PC-9 (cell line): ENCODE measurements at regions of chr17 and their contacts with region 1.

Region 1: DNA sequence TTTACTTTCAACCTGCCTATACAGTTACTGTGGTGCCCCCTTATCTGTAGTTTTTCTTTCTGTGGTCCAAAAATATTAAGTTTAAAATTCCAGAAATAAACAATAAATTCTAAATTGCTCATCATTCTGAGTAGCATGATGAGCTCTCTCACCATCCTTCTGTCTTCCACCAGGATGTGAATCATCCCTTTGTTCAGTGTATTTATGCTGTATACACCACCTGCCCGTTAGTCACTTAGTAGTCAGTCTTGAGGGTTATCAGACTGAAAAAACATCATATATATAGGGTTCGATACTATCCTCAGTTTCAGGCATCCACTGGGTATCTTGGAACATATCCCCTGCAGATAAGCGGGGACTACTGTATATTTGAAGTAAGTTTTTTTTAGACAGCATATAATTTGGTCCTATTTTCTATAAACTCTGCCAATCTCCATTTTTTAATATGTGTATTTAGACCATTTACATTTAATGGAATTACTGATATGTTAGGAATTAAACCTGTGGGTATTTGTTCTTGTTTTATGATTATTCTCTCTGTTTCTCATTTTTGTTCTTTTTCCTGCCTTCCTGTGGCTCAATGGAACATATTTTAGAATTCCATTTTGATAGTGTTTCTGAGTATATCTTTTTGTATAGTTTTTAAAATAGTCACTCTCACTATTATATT is 31.0 kb downstream of the TBX21 start:
- DNase-seq: no peak
- H3K4me3 ChIP-seq: no peak overlapping the region
- H3K27ac ChIP-seq: no peak overlapping the region
- H3K4me1 ChIP-seq: no peaks in the 10 kb centered on the region
- H3K27me3 ChIP-seq: peaks cover 60% of the 10 kb centered on the region
- CTCF ChIP-seq: no peak

Region 2: DNA sequence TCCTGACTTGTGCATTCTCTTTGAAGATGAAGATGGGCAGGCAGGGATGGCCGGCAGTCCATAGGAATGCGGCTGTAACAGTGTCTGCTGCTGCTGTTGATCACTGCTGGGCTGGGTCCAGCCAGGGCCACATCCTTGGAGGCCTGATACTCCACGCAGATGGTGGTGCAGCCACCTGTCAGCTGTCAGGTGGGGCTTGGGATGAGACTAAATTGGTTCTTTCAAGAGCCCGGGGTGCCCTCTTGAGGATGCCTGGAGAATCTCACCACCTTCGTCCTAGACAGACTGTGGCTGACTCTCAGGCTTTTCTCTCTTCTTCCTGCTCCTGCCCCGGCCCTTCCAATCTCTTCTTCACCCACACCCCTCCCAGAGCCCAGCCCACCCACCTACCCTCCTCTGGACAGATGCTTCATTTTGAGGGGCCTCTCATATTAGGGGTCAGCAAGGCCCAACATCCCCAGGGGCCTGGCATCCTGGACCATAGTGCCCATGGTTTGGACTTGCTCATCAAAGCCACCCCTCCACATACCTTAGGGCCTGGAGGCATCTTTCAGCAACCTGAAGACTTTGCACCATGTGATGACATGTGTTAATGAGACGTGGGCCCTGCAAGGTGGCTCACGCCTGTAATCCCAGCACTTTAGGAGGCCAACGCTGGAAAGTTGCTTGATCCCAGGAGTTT is 38.4 kb after region 1 on chr17:
- CTCF ChIA-PET with region 1: no interaction called
- POLR2A ChIA-PET with region 1: no interaction called
- intact Hi-C with region 1: loop called (anchors 2 kb)
- DNase-seq: peak; percentile 48 to 62
- H3K4me3 ChIP-seq: no peak overlapping the region
- H3K27ac ChIP-seq: no peak overlapping the region
- H3K4me1 ChIP-seq: no peaks in the 10 kb centered on the region
- H3K27me3 ChIP-seq: 0 out of 2 replicates have a peak, but pooled peaks cover 2% of the 10 kb centered on the region
- CTCF ChIP-seq: peak; percentile 84

Region 3: GRCh38 chr17:48011405-48012150 is 247.5 kb after region 1 on chr17:
- CTCF ChIA-PET with region 1: no interaction called
- POLR2A ChIA-PET with region 1: no interaction called
- intact Hi-C with region 1: no loop called
- DNase-seq: peak in 1 of 2 experiments; percentile 35
- H3K4me3 ChIP-seq: peak overlapping the region; percentile 23; the same call in 1 of the 2 replicates
- H3K27ac ChIP-seq: no peak overlapping the region
- H3K4me1 ChIP-seq: 0 out of 2 replicates have a peak, but pooled peaks cover 4% of the 10 kb centered on the region
- H3K27me3 ChIP-seq: no peaks in the 10 kb centered on the region
- CTCF ChIP-seq: peak; percentile 66